ENCODE measurements at regions of chr1 and their contacts with region 1.

Region 1: DNA sequence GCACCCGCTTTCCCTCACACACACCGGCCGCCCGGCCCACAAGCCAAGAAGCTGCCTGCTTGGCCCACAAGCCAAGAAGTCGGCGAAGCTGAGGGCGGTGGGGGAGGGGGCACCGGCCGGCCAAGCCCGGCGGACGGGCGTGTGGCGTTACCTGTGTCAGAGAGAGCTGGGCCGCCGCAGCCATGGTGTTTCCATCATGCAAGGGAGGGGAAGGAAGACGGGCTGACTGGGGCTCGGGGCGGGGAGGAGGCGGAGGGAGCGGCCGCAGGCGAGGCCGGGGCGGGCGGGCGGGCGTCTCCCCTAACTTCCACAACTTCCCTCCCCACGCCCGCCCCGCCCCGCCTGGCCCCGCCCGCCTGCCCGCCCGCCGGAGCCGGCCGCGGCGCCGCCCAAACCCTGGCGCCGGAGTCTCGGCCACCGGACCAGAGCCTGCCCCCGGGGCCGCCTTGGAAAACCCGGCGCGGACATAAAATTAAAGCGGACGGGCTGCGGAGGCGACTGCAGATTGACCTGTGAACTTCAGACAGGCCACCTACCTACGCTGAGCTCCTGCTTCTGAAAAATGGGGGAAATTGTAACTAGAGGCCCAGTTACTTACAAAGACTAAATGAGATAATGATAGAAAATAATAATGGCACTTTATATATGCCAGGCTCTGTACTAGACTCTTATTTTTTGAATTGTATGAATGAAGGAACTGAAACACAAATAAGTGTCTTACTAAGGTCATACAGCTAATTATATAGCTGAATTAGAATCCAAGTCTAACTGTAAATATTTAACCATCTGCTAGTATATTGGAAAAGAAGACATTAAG is at the start of gene EPS15:
- DNase-seq: peak; percentile 91
- H3K4me3 ChIP-seq: peak within 1 kb of the TSS; percentile 74
- H3K27ac ChIP-seq: peak within 1 kb of the TSS; percentile 64
- H3K4me1 ChIP-seq: peaks cover 30% of the 10 kb centered on the region
- H3K27me3 ChIP-seq: no peaks in the 10 kb centered on the region
- CTCF ChIP-seq: no peak
- total RNA-seq, gene EPS15: 50.6 and 55.6 TPM in 2 replicates

Region 2: DNA sequence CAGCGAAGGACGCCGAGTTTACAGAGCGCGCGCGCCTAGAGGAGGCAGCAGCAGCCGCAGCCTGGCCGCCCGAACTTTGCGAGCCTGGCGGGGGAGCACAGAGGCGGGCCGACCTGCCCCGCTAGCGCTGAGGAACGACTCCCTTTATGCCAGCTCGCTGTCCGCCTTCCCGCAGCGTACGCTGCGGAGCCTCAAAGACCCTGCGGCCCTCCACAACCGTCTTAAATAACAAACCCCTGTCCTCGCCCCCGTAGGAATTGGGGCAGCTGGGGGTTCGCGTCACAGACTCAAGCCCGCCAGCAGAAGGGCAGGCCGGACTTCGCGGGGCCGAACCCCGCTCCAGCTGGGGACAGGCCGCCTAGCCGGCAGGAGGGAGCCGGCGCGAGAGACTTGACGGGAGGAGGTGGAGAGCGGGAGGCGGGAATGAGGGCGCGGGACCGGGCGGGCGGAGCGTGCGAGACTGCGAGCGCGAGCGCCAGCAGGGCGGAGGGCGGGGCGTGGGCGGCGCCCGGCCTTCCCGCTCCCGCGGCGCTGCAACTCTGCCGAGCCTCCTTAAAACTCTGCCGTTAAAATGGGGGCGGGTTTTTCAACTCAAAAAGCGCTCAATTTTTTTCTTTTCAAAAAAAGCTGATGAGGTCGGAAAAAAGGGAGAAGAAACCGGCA is 551.0 kb before region 1 on chr1:
- CTCF ChIA-PET with region 1: no interaction called
- POLR2A ChIA-PET with region 1: no interaction called
- intact Hi-C with region 1: no loop called
- DNase-seq: peak; percentile 96
- H3K4me3 ChIP-seq: peak overlapping the region; percentile 92
- H3K27ac ChIP-seq: peak overlapping the region; percentile 97
- H3K4me1 ChIP-seq: peaks cover 19% of the 10 kb centered on the region
- H3K27me3 ChIP-seq: no peaks in the 10 kb centered on the region
- CTCF ChIP-seq: peak; percentile 50; the same call in 1 of the 2 replicates

Region 3: GRCh38 chr1:51433269-51433971 is 85.8 kb before region 1 on chr1:
- CTCF ChIA-PET with region 1: no interaction called
- POLR2A ChIA-PET with region 1: no interaction called
- intact Hi-C with region 1: loop called (anchors 5 kb)
- DNase-seq: peak; percentile 89
- H3K4me3 ChIP-seq: no peak overlapping the region
- H3K27ac ChIP-seq: peak overlapping the region; percentile 85
- H3K4me1 ChIP-seq: peaks cover 53% of the 10 kb centered on the region
- H3K27me3 ChIP-seq: no peaks in the 10 kb centered on the region
- CTCF ChIP-seq: no peak

Region 4: GRCh38 chr1:51600529-51600928 is 81.3 kb after region 1 on chr1:
- CTCF ChIA-PET with region 1: no interaction called
- POLR2A ChIA-PET with region 1: interaction called, 16 read pairs
- intact Hi-C with region 1: no loop called
- DNase-seq: no peak
- H3K4me3 ChIP-seq: no peak overlapping the region
- H3K27ac ChIP-seq: no peak overlapping the region
- H3K4me1 ChIP-seq: no peaks in the 10 kb centered on the region
- H3K27me3 ChIP-seq: no peaks in the 10 kb centered on the region
- CTCF ChIP-seq: no peak

Measured in A673 (cell line).